Posterior vena cava (tissue), 2 donors: ENCODE measurements at regions of chr7 and their contacts with region 1.

Region 1: DNA sequence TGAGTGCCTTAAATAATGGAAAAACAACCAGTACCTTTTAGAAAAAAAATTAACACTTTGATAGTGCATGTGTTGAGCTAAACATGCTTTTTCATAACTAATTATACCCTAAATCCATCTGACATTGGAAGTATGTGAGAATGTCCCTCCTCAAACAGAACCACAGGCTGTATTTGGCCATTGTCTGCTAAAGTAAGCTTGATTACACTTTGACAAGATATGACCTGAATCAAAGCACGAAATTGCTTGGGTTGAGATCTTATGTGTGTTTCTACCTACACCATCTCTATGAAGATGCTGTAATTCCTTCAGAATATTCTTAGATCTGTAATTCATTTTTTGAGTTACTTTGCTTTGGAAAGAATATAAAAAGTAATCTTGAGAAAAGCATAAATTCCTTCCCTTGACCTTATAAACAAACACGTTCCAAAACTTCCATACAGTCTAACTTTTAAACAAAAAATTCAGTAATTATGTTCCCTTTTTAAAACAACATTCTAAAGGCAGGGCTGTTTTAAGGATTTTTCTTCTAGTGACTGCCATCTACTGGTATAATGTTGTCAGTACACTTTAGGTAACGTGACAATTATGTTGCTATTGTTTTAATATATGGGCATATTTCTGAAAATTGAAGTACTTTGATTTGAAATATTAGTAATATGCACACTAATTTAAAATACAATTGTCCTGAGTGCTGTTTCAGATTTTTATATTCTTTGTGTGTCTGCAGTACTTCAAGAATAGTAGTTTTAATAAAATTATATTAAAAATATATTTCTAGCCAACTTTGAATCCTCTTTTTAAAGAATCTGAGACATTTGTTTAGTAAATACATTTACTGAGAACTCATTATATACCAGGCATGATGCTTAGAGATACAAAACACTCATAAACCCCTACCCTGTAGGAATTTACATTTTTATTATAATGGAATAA is 20.9 kb downstream of the CD36 start:
- DNase-seq: no peak

Region 2: GRCh38 chr7:80428161-80429054 is 231.0 kb before region 1 on chr7:
- intact Hi-C with region 1: loop called (anchors 2 to 10 kb)
- DNase-seq: no peak

Region 3: DNA sequence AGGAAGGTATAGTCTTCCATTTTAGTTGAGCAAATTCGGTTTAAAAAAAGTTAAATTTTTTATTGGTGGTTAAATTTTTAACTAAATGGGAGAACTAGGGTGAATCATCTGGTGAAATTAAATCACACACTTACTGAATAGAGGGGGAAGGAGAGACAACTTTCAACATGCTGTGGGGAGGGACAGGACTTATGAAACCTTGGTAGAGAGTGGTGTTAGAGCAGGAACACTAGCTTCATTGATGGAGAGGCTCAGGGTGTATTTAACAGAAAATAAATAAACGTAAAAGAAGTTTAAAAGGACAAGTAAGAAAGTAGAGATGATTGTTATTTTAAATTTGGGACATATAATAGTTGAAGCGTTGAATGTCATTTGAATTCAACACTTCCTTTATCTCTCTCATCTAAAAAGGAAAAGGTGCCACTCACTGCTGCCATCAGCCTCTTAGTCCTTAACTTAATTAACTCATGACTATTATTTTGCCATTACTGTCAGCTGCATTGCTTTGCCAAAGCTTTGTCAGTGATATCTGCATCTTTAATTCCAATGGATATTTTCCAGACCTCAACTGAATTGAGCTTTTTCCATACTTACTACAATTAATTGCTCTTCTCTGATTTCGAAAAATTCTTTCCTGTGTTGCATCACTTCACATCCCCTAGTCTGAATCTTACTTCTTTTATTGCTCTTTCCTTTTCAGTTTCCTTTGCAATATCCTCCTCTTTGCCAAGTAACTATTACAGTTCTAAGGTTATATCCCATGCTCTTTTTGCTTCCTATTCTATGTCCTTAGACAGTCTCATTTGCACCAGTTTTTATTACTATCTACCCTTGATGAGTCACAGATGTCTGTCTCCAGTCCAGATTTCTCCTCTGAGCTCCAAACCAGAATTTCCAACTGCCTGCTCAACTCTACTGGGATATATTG is 219.2 kb before region 1 on chr7:
- intact Hi-C with region 1: loop called in 1 of 2 experiments (anchors 10 kb)
- DNase-seq: no peak

Region 4: DNA sequence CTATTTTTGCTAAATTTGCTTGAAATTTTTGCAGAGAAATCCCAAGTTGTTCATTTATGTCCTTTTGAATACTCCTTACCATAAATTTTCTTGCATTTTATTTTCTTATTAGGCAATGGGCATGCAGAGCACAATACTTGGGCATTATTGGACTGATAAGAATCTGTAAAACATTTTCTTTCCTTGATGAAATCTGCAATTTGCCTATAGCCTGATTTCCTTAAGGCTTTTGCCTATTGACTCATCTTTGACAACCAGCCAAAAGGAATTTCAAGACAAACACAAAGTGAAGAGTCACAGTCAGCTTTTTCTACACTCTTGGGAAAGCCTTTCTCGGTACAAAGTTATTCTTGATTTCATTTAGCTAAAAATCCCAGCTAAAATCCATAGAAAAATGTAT is 117.0 kb before region 1 on chr7:
- intact Hi-C with region 1: loop called in 1 of 2 experiments (anchors 10 kb)
- DNase-seq: no peak

Region 5: GRCh38 chr7:80584778-80585177 is 74.6 kb before region 1 on chr7:
- intact Hi-C with region 1: loop called in 1 of 2 experiments (anchors 10 kb)
- DNase-seq: no peak